Head of caudate nucleus (tissue), 42 donors: ENCODE measurements at regions of chr15 and their contacts with region 1.

Region 1: DNA sequence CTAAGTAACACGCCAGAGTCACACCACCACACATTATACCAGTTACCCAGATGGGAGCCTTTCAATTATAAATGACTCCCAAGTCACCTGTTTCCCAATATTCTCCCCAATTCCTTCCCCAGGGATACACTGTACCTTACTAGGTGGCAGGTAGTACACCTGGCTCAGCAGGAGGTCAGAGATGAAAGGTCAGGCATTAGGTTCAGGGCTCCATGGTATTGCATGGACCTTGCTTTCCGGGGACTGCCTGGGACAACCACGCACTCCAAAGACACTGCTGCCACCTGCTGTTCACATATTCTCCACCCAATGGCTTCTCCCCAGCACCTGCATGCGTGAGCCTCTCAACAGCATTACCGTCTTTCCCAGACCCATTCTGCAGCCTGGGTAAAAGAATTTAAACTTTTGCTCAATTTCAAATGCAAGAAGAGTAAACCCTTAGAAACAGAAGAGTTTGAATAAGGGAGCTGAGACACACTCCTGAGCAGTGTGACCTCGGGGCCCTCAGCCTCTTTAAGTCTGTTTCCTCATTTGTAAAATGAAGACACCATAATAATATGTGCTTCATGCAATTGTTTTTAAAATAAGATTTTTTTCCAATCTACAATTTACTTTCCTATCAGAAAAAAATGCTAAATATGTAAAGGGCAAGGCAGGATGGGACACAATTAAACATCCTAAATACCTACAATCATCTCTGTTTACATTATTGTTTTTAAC is 28.0 kb upstream of the LACTB start:
- DNase-seq: peak; percentile 68 to 94 (median 86)

Region 2: GRCh38 chr15:62782039-62782791 is 311.4 kb before region 1 on chr15:
- intact Hi-C with region 1: loop called (anchors 5 kb)
- DNase-seq: peak in 39 of 42 donors; percentile 21 to 85 (median 61)

Region 3: DNA sequence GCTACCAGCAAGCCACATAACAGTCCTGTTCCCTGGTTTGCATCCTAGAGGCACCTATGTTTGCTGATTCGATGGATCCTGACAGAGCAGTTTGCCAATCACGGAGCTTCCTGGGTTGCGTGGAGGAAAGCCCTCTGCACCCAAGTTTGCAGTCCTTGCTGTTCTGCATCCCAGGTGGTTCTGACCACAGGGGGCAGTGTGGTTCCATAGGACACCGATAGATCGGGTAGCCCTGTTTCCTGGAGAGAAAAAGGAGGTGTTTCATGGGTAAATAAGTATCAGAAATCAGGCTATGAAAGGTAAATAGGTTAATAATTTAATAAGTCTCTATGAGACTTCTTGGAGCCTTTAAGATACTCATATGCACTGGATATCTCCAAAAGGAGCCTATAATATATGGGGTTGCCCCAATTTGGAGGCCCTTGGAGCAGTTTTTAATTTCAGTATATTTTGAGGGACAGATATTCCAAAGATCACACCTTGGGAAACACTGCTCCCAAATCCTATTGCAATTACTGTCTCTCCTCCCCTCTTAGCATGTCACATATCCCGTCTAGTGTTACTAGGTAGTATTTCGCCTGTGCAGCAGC is 245.7 kb before region 1 on chr15:
- intact Hi-C with region 1: loop called (anchors 5 kb)
- DNase-seq: peak; percentile 75 to 95 (median 88)

Region 4: DNA sequence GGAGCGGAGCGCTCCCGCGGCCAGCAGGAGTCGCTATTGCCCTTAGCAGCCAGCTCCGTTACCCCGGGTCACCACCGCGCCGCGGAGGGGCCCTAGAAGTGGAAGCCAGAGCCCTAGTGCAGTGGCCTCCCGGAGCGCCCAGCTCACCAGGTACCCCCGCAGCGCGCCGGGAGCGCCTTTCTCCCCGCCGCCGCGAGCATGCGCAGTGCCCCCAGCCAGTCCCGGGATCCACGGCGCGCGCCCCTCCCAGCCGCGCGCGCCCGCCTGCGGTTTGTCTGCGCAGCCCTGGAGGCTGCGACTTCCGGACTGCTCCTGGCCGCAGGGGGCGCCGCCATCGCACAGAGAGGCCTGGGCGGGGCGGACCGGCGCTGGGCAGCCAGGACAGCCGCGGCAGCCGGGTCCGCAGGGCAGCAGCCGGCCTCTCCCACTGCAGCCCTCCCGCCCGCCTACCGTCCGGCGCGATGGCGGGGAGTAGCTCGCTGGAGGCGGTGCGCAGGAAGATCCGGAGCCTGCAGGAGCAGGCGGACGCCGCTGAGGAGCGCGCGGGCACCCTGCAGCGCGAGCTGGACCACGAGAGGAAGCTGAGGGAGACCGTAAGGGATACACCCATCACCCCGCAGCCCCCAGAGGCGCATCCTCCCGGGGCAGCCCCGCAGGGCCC is 45.4 kb before region 1 on chr15:
- intact Hi-C with region 1: loop called (anchors 5 kb)
- DNase-seq: peak; percentile 77 to 95 (median 88)